BJ (cell line): ENCODE measurements at regions of chr9 and their contacts with region 1.

Region 1: DNA sequence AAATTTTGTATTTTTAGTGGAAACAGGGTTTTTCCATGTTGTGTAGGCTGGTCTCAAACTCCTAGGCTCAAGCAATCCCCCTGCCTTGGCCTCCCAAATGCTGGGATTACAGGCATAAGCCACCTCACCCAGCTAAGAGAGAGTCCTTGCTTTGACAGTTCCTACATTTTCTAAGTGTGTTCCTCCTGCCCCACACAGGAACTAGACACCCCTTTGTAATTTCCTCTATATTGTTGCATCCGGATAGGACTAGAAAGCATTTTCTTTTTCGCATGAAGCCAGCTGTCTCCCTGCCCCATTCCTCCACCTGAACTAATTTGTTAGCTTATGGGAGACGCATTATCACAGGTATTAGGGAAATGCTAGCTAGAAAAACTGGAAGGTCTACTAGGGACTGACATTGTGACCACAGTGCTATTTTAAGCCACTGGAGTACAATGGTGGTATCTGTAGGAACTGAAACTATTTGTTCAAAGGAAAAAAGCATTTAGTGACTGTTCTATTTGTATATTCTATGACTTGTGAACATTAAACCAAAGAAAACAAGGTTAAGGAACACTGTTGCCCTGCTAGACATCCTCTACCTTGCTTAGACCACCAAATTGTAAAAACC is 214.1 kb downstream of the SMARCA2 start:
- DNase-seq: no peak
- H3K4me3 ChIP-seq: no peak overlapping the region
- H3K27me3 ChIP-seq: peaks cover 1% of the 10 kb centered on the region; the same call in 1 of the 2 replicates
- CTCF ChIP-seq: no peak

Region 2: DNA sequence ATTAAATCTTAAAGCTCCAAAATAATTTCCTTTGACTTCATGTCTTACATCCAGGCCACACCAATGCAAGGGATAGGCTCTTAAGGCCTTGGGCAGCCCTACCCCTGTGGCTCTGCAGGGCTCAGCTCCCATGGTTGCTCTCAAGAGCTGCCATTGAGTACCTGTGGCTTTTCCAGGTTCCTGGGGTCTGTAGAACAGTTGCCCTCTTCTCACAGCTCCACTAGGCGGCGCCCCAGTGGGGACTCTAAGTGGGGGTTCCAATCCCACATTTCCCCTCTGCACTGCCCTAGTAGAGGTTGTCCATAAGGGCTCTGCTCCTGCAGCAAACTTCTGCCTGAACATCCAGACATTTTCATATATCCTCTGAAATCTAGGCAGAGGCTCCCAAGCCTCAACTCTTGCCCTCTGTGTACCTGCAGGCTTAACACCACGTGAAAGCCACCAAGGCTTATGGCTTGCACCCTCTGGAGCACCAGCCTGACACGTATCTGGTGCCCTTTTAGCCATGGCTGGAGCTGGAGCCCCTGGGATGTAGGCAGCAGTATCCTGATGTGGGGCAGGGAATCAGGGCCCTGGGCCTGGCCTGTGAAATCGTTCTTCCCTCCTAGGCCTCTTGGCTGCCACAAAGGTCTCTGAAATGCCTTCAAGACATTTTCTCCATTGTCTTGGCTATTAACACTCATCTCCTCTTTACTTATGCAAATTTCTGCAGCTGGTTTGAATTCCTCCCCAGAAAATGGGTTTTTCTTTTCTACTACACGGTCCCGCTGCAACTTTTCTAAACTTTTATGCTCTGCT is 29.0 kb before region 1 on chr9:
- CTCF ChIA-PET with region 1: no interaction called
- POLR2A ChIA-PET with region 1: no interaction called
- DNase-seq: no peak
- H3K4me3 ChIP-seq: no peak overlapping the region
- H3K27me3 ChIP-seq: no peaks in the 10 kb centered on the region
- CTCF ChIP-seq: no peak

Region 3: GRCh38 chr9:2241836-2242741 is 12.9 kb after region 1 on chr9:
- CTCF ChIA-PET with region 1: interaction called, 10 read pairs
- POLR2A ChIA-PET with region 1: no interaction called
- DNase-seq: no peak
- H3K4me3 ChIP-seq: peak overlapping the region; percentile 39
- H3K27me3 ChIP-seq: no peaks in the 10 kb centered on the region
- CTCF ChIP-seq: peak; percentile 21; the same call in 1 of the 2 replicates

Region 4: GRCh38 chr9:2260354-2261306 is 31.4 kb after region 1 on chr9:
- CTCF ChIA-PET with region 1: no interaction called
- POLR2A ChIA-PET with region 1: no interaction called
- DNase-seq: no peak
- H3K4me3 ChIP-seq: no peak overlapping the region
- H3K27me3 ChIP-seq: no peaks in the 10 kb centered on the region
- CTCF ChIP-seq: no peak